Activated naive CD4-positive, alpha-beta T cell treated with anti-CD3 and anti-CD28 coated beads, Interleukin-2, amount 10 ng/mL, durations not matched to agents 7 days and 5 days (primary cell): ENCODE measurements at regions of chr22 and their contacts with region 1.

Region 1: GRCh38 chr22:30005213-30005857 is 74.9 kb upstream of the HORMAD2 start:
- DNase-seq: peak; percentile 77
- H3K4me3 Mint-ChIP-seq: no peak overlapping the region
- H3K27ac Mint-ChIP-seq: peak overlapping the region; percentile 58
- H3K4me1 Mint-ChIP-seq: peaks cover 11% of the 10 kb centered on the region
- H3K27me3 Mint-ChIP-seq: no peaks in the 10 kb centered on the region

Region 2: GRCh38 chr22:29635734-29636357 is 369.5 kb before region 1 on chr22:
- CTCF ChIA-PET with region 1: interaction called, 13 read pairs
- DNase-seq: no peak
- H3K4me3 Mint-ChIP-seq: no peak overlapping the region
- H3K27ac Mint-ChIP-seq: no peak overlapping the region
- H3K4me1 Mint-ChIP-seq: peaks cover 20% of the 10 kb centered on the region
- H3K27me3 Mint-ChIP-seq: no peaks in the 10 kb centered on the region

Region 3: GRCh38 chr22:29689880-29690213 is 315.5 kb before region 1 on chr22:
- CTCF ChIA-PET with region 1: interaction called, 13 read pairs
- DNase-seq: peak; percentile 62
- H3K4me3 Mint-ChIP-seq: no peak overlapping the region
- H3K27ac Mint-ChIP-seq: no peak overlapping the region
- H3K4me1 Mint-ChIP-seq: peaks cover 6% of the 10 kb centered on the region
- H3K27me3 Mint-ChIP-seq: no peaks in the 10 kb centered on the region

Region 4: DNA sequence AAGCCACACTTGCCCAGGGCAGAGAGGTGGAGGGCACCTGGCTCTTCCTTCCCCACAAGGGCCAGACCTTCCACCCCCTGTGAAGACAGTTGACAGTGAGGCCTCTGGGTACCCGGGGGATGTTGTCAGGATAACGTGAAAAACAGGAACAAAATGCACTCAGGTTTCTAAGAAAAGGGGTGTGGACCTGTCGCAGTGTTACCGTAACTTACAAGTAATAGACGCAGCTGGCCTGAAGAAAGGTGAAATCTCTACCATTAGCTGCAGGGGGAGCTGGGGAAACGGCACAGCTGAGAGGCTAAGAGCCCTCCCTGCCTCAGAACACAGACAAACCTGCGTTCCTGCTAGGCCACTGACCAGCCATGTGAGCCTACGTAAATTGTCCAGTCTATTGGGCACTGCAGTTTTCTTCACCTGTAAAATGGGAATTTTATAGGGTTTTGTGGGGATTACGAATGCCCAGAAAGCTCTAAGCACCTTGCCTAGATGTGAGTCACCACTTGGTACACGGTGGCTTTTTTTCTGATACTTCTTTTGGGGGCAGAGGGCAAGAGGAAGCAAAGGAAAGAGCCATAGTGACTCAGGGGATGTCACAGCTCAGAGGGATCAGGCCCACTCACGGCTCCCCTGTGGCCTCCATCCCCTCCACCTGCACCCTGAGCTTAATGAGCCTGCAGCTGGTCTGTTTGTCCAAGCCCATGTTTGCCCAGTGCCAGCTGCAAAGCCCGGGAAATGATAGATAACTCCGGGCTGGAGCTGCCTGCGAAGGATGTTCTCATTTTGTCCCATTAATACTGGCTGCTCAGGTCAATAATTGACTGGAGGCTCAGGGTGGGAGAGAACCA is 304.0 kb before region 1 on chr22:
- CTCF ChIA-PET with region 1: interaction called, 11 read pairs
- DNase-seq: peak; percentile 65
- H3K4me3 Mint-ChIP-seq: peak overlapping the region; percentile 15
- H3K27ac Mint-ChIP-seq: peak overlapping the region; percentile 87
- H3K4me1 Mint-ChIP-seq: peaks cover 27% of the 10 kb centered on the region
- H3K27me3 Mint-ChIP-seq: peaks cover 14% of the 10 kb centered on the region

Region 5: DNA sequence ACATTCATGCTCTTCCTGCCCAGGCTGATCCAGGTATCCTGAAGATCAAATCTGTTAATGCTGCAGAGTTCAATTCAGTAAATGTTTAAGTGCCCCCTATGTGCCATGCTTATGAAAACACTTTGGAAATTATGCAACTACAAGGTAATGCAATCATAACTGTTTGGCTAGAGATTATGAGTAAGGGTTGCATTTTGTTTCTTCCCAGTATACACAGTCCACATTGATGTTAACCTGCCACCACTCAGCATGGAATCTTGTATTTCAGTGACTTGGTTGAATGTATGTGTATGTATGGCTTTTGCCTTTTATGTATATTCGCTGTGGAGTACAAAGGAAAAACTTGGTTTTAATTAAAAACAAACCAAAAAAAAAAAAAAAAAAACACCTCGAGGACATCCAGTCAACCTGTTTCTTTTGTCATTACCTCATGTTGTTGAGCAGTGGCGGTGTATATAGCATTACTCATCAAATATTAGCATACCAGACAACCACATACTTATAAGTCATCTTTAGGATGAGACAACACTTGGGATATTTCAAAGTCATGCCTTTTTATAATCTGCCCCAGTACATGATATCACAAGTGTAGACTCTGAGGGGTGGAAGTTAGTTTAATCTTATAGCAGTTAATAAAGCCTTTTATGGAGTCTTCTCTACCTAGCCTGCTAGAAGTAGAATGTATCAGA is 11.2 kb before region 1 on chr22:
- CTCF ChIA-PET with region 1: interaction called, 21 read pairs
- DNase-seq: no peak
- H3K4me3 Mint-ChIP-seq: no peak overlapping the region
- H3K27ac Mint-ChIP-seq: no peak overlapping the region
- H3K4me1 Mint-ChIP-seq: peaks cover 3% of the 10 kb centered on the region
- H3K27me3 Mint-ChIP-seq: no peaks in the 10 kb centered on the region

Region 6: GRCh38 chr22:30015846-30016245 is 10.5 kb after region 1 on chr22:
- CTCF ChIA-PET with region 1: interaction called, 15 read pairs
- DNase-seq: no peak
- H3K4me3 Mint-ChIP-seq: no peak overlapping the region
- H3K27ac Mint-ChIP-seq: no peak overlapping the region
- H3K4me1 Mint-ChIP-seq: no peaks in the 10 kb centered on the region
- H3K27me3 Mint-ChIP-seq: no peaks in the 10 kb centered on the region

Region 7: GRCh38 chr22:30089655-30089974 is 84.3 kb after region 1 on chr22:
- CTCF ChIA-PET with region 1: interaction called, 11 read pairs
- DNase-seq: no peak
- H3K4me3 Mint-ChIP-seq: no peak overlapping the region
- H3K27ac Mint-ChIP-seq: no peak overlapping the region
- H3K4me1 Mint-ChIP-seq: peaks cover 16% of the 10 kb centered on the region
- H3K27me3 Mint-ChIP-seq: peaks cover 15% of the 10 kb centered on the region